Sciatic nerve (tissue), 2 donors: ENCODE measurements at regions of chr2 and their contacts with region 1.

Region 1: GRCh38 chr2:205766779-205767359 is 84.6 kb downstream of the NRP2 start:
- DNase-seq: peak; percentile 84
- ATAC-seq: peak; percentile 17

Region 2: DNA sequence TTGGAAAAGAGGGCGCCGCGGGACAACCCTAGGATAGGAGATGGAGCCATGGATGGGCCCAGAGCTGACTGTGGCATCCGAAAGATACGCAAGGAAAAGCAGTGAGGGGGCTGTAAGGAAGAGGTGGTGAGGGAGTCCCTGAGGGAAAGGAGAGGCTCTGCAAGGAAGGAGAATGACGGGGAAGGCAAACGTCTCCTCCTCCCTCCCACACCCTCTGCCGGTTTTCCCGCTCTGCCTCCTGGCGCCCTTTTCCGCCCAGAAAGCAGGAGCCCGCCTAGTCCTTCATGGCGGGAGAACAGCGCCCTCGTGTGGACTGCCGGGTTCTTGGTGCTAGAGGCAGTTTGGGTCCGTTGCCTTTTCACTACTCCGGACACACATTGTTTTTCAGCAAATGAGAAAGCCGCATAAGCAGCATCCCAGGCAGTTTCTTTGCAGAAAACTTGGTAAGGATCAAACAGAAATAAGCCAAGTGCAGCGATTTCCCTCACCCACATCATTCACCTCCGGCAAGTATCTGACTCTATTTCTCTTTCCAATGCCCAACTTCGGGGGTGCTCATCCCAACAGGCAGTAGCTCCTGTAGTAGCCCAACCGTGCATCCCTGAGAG is 118.7 kb after region 1 on chr2:
- intact Hi-C with region 1: loop called (anchors 2 kb)
- DNase-seq: peak; percentile 96
- ATAC-seq: peak; percentile 96